ENCODE measurements at regions of chr14 and their contacts with region 1.

Region 1: GRCh38 chr14:64191756-64192155 is 102.4 kb downstream of the ESR2 start:
- DNase-seq: peak; percentile 71
- H3K4me3 ChIP-seq: no peak overlapping the region
- H3K27ac ChIP-seq: no peak overlapping the region
- H3K4me1 ChIP-seq: peaks cover 5% of the 10 kb centered on the region
- H3K27me3 ChIP-seq: no peaks in the 10 kb centered on the region
- CTCF ChIP-seq: no peak

Region 2: DNA sequence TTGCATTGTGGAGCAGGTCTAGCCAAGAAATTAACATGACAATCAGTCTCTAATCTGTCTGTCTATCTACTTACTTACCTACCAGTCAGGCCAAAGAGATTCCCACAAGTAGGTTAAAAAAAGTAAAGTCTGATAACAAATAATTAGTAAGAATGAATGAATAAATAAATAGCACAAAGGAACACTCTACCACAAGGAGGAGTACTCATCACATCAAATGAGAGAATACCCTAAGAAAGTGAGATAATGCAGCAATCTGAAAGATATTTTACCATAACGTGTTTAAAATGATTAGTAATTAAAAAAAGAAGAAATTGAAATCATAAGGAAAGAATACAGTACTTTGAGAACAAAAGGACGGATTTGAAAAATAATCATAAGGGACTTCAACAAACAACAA is 151.7 kb before region 1 on chr14:
- CTCF ChIA-PET with region 1: no interaction called
- dilution Hi-C with region 1: no loop called
- in situ Hi-C with region 1: no loop called
- intact Hi-C with region 1: loop called (anchors 5 kb)
- DNase-seq: no peak
- H3K4me3 ChIP-seq: no peak overlapping the region
- H3K27ac ChIP-seq: no peak overlapping the region
- H3K4me1 ChIP-seq: no peaks in the 10 kb centered on the region
- H3K27me3 ChIP-seq: no peaks in the 10 kb centered on the region
- CTCF ChIP-seq: peak; percentile 35 to 41

Region 3: DNA sequence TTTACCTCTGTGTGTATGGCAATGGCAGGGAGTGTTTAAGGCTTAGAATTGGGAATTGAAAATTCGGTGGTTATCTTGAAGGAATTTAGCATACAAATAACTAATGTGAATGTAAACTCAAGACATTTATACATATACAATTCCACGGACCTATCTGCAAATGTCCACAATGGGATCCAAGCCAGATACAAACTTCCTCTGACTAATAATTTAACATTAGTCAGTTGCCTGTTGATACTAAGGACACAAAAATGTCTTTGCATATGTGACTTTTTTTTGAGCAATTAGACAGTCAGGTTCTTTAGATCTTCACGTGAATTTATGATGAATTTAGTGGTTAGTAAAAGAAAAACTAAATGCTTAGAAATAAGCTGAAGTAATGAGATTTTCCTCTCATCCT is 61.9 kb after region 1 on chr14:
- CTCF ChIA-PET with region 1: no interaction called
- dilution Hi-C with region 1: no loop called
- in situ Hi-C with region 1: no loop called
- intact Hi-C with region 1: no loop called
- DNase-seq: peak; percentile 48
- H3K4me3 ChIP-seq: no peak overlapping the region
- H3K27ac ChIP-seq: no peak overlapping the region
- H3K4me1 ChIP-seq: no peaks in the 10 kb centered on the region
- H3K27me3 ChIP-seq: no peaks in the 10 kb centered on the region
- CTCF ChIP-seq: no peak

Measured in mammary epithelial cell (primary cell).